Transverse colon (tissue), 4 donors: ENCODE measurements at regions of chr19 and their contacts with region 1.

Region 1: DNA sequence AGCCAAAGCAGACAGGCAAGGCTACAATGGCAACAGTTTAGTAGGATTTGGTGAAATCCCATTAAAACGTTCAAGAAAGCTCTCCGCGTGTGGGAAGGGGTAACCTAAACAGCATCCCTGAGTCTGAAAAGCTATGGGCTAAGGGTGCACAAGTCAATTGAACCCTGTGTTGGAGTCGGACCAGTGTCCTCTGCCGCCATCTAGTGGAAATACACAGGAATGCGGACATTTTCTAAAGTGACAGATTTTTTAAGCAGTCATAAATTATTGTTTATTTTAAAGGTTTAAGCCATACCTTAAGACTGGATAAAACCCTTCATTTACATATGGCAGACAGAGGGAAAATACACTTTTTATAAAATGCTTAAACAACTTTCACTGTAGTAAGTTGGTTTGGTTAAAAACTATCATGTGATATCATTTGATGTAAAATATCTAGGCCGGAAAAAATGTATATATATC is 26.5 kb upstream of the LSM14A start:
- DNase-seq: peak; percentile 38
- H3K4me3 ChIP-seq: no peak overlapping the region
- H3K27ac ChIP-seq: no peak overlapping the region
- H3K4me1 ChIP-seq: no peaks in the 10 kb centered on the region
- H3K27me3 ChIP-seq: no peaks in the 10 kb centered on the region
- CTCF ChIP-seq: peak; percentile 71 to 85 (median 76)
- EP300 ChIP-seq: no peak
- POLR2A ChIP-seq: no peak

Region 2: GRCh38 chr19:34041925-34042521 is 103.7 kb before region 1 on chr19:
- in situ Hi-C with region 1: no loop called
- intact Hi-C with region 1: loop called (anchors 10 kb)
- DNase-seq: peak; percentile 63
- H3K4me3 ChIP-seq: no peak overlapping the region
- H3K27ac ChIP-seq: no peak overlapping the region
- H3K4me1 ChIP-seq: no peaks in the 10 kb centered on the region
- H3K27me3 ChIP-seq: peaks cover 7% of the 10 kb centered on the region
- CTCF ChIP-seq: peak; percentile 59 to 85 (median 78)
- EP300 ChIP-seq: no peak
- POLR2A ChIP-seq: no peak

Region 3: GRCh38 chr19:34165295-34165738 is 19.5 kb after region 1 on chr19:
- in situ Hi-C with region 1: no loop called
- intact Hi-C with region 1: no loop called
- DNase-seq: no peak
- H3K4me3 ChIP-seq: no peak overlapping the region
- H3K27ac ChIP-seq: no peak overlapping the region
- H3K4me1 ChIP-seq: no peaks in the 10 kb centered on the region
- H3K27me3 ChIP-seq: no peaks in the 10 kb centered on the region
- CTCF ChIP-seq: no peak
- EP300 ChIP-seq: no peak
- POLR2A ChIP-seq: no peak